CD4-positive, alpha-beta memory T cell (primary cell): ENCODE measurements at regions of chr14 and their contacts with region 1.

Region 1: GRCh38 chr14:76911473-76911872 is 85.3 kb downstream of the LRRC74A start:
- DNase-seq: no peak
- H3K4me3 ChIP-seq: no peak overlapping the region
- H3K4me3 Mint-ChIP-seq: no peak overlapping the region
- H3K27ac ChIP-seq: no peak overlapping the region
- H3K27ac Mint-ChIP-seq: peak overlapping the region in 3 of 7 donors; percentile 30 to 69 (median 30)
- H3K4me1 ChIP-seq: peaks cover 37% of the 10 kb centered on the region
- H3K4me1 Mint-ChIP-seq: peaks cover 21 to 38% (median 22%) of the 10 kb centered on the region in 4 donors
- H3K27me3 ChIP-seq: no peaks in the 10 kb centered on the region
- H3K27me3 Mint-ChIP-seq: no peaks in the 10 kb centered on the region

Region 2: DNA sequence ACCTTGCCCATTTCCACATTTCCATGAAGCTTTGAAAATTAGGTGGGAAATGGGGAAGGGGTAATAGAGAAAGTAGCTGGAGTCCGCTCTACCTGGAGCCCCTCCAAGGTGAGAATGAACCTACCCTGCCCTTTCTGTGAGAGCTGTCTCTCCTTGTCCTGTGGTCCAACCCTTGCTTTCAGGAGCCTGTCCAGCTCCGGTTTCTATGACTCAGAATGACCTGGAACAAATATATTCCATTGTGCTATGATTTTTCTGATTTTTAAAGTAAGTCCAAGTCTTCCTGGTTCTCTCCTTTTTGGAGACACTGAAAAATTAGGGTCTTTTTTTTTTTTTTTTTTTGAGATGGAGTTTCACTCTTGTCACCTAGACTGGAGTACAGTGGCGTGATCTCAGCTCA is 239.3 kb before region 1 on chr14:
- CTCF ChIA-PET with region 1: no interaction called
- POLR2A ChIA-PET with region 1: no interaction called
- intact Hi-C with region 1: no loop called
- DNase-seq: no peak
- H3K4me3 ChIP-seq: no peak overlapping the region
- H3K4me3 Mint-ChIP-seq: no peak overlapping the region
- H3K27ac ChIP-seq: no peak overlapping the region
- H3K27ac Mint-ChIP-seq: no peak overlapping the region
- H3K4me1 ChIP-seq: no peaks in the 10 kb centered on the region
- H3K4me1 Mint-ChIP-seq: no peaks in the 10 kb centered on the region
- H3K27me3 ChIP-seq: no peaks in the 10 kb centered on the region
- H3K27me3 Mint-ChIP-seq: peaks cover 10 to 20% of the 10 kb centered on the region in 2 donors

Region 3: GRCh38 chr14:76937181-76938091 is 26.0 kb after region 1 on chr14:
- CTCF ChIA-PET with region 1: interaction called, 35 read pairs
- POLR2A ChIA-PET with region 1: interaction called, 5 read pairs
- intact Hi-C with region 1: no loop called
- DNase-seq: no peak
- H3K4me3 ChIP-seq: no peak overlapping the region
- H3K4me3 Mint-ChIP-seq: no peak overlapping the region
- H3K27ac ChIP-seq: no peak overlapping the region
- H3K27ac Mint-ChIP-seq: peak overlapping the region in 1 of 7 donors; percentile 48
- H3K4me1 ChIP-seq: peaks cover 4% of the 10 kb centered on the region
- H3K4me1 Mint-ChIP-seq: peaks cover 13 to 23% (median 15%) of the 10 kb centered on the region in 4 donors
- H3K27me3 ChIP-seq: no peaks in the 10 kb centered on the region
- H3K27me3 Mint-ChIP-seq: no peaks in the 10 kb centered on the region

Region 4: DNA sequence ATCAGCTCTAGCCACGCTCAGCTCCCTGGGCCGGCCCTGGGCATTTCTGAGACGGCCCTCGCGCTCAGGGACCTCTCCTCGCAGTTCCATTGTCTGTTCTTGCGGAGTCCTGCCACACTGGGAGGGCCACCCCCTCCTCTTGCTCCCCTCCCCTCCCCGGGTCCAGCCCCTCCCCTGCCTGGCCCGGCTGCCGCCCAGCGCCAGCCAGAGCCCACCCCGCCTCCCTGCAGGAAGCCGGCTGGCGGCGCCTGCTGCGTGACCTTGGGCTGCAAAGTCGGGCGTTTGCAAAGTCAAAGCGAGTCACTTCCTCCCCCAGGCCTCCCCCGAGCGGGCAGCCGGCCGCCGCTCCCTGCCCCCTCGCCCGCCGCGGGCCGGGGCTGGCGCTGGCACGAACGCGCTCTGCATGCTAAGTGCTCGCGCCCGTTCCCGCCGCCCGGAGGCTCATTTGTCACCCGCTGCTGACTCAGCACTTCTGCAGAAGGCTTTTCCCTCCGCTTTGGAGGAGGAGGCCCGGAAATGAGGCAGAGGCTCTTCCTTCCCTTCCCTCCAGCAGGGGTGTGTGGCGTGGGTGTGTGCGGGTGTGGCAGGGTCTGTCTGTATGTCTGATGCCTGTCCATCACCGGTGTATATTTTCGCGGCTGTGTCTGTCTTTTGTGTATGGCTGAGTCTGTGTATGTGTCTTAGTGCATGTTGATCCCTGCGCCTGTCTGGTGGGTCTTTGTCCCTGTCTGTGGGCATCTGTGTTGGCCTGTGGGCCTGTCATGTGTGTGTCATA is 45.0 kb after region 1 on chr14:
- CTCF ChIA-PET with region 1: interaction called, 49 read pairs
- POLR2A ChIA-PET with region 1: interaction called, 12 read pairs
- intact Hi-C with region 1: loop called (anchors 1 kb)
- DNase-seq: peak; percentile 83 to 97 (median 85)
- H3K4me3 ChIP-seq: peak overlapping the region; percentile 61 to 64
- H3K4me3 Mint-ChIP-seq: peak overlapping the region; percentile 81 to 96 (median 88)
- H3K27ac ChIP-seq: peak overlapping the region; percentile 94
- H3K27ac Mint-ChIP-seq: peak overlapping the region; percentile 87 to 99 (median 98)
- H3K4me1 ChIP-seq: peaks cover 72% of the 10 kb centered on the region
- H3K4me1 Mint-ChIP-seq: peaks cover 37 to 75% (median 53%) of the 10 kb centered on the region in 4 donors
- H3K27me3 ChIP-seq: no peaks in the 10 kb centered on the region
- H3K27me3 Mint-ChIP-seq: no peaks in the 10 kb centered on the region

Region 5: GRCh38 chr14:76977793-76978720 is 66.6 kb after region 1 on chr14:
- CTCF ChIA-PET with region 1: interaction called, 13 read pairs
- POLR2A ChIA-PET with region 1: no interaction called
- intact Hi-C with region 1: no loop called
- DNase-seq: peak; percentile 67 to 97 (median 74)
- H3K4me3 ChIP-seq: no peak overlapping the region
- H3K4me3 Mint-ChIP-seq: peak overlapping the region in 7 of 8 donors; percentile 4 to 75 (median 43)
- H3K27ac ChIP-seq: peak overlapping the region; percentile 54
- H3K27ac Mint-ChIP-seq: peak overlapping the region; percentile 79 to 94 (median 93)
- H3K4me1 ChIP-seq: peaks cover 18% of the 10 kb centered on the region
- H3K4me1 Mint-ChIP-seq: peaks cover 10 to 13% (median 11%) of the 10 kb centered on the region in 4 donors
- H3K27me3 ChIP-seq: no peaks in the 10 kb centered on the region
- H3K27me3 Mint-ChIP-seq: no peaks in the 10 kb centered on the region

Region 6: DNA sequence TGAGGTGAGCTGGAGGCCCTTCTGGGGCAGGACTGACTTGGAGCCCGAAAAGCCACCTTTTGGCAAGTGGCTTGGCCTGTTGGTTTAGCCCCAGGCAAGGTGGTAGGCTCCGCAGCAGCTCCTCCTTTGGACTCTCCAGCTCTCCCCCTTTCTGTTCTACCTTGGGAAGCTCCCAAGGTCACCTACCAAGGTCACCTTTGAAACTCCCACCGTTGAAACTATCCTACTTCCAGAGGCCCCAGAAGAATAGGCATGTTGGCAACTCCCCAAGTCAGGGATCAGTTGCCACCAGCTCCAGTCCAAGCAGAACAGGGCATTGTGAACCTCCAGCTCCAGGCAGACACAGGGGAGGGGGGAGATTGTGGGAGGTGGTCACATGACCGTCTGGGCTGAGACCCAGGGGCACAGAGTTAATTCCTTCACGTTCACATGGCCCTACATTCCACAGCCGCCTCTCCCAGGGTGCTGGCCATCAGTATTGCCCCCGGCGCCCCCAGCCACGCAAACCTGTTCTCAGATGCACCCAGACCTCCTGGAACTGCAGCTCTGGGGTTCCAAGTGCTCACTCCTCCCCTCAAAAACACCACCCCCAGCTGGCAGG is 102.6 kb after region 1 on chr14:
- CTCF ChIA-PET with region 1: interaction called, 13 read pairs
- POLR2A ChIA-PET with region 1: interaction called, 4 read pairs
- intact Hi-C with region 1: no loop called
- DNase-seq: no peak
- H3K4me3 ChIP-seq: no peak overlapping the region
- H3K4me3 Mint-ChIP-seq: no peak overlapping the region
- H3K27ac ChIP-seq: no peak overlapping the region
- H3K27ac Mint-ChIP-seq: peak overlapping the region in 1 of 7 donors; percentile 47
- H3K4me1 ChIP-seq: peaks cover 15% of the 10 kb centered on the region
- H3K4me1 Mint-ChIP-seq: peaks cover 16 to 25% (median 19%) of the 10 kb centered on the region in 4 donors
- H3K27me3 ChIP-seq: no peaks in the 10 kb centered on the region
- H3K27me3 Mint-ChIP-seq: no peaks in the 10 kb centered on the region